Heart left ventricle (tissue), 16 donors: ENCODE measurements at regions of chr2 and their contacts with region 1.

Region 1: DNA sequence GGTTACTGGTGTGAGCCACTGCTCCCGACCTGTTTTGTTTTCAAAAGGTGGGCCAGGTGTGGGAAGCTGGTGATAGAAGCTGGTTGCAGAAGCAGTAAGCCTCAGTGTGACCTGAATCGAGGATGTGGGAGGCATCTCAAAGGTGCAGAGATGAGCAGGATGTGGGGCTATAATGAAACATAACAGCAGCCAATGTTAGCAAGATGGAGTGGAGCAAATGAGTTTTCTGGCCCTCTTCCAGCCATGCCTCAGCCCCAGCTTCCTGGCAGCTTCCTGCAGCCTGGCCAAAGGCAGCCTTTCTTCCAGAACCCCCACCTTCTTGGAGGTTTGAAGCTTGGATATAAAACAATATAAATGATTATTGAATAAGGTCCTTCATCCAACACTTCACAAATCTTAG is 184.8 kb downstream of the NCK2 start:
- DNase-seq: no peak
- ATAC-seq: no peak
- H3K4me3 ChIP-seq: no peak overlapping the region
- H3K27ac ChIP-seq: no peak overlapping the region
- H3K4me1 ChIP-seq: peaks cover 0 to 36% (median 8%) of the 10 kb centered on the region in 12 donors
- H3K27me3 ChIP-seq: no peaks in the 10 kb centered on the region
- CTCF ChIP-seq: no peak
- POLR2A ChIP-seq: no peak

Region 2: DNA sequence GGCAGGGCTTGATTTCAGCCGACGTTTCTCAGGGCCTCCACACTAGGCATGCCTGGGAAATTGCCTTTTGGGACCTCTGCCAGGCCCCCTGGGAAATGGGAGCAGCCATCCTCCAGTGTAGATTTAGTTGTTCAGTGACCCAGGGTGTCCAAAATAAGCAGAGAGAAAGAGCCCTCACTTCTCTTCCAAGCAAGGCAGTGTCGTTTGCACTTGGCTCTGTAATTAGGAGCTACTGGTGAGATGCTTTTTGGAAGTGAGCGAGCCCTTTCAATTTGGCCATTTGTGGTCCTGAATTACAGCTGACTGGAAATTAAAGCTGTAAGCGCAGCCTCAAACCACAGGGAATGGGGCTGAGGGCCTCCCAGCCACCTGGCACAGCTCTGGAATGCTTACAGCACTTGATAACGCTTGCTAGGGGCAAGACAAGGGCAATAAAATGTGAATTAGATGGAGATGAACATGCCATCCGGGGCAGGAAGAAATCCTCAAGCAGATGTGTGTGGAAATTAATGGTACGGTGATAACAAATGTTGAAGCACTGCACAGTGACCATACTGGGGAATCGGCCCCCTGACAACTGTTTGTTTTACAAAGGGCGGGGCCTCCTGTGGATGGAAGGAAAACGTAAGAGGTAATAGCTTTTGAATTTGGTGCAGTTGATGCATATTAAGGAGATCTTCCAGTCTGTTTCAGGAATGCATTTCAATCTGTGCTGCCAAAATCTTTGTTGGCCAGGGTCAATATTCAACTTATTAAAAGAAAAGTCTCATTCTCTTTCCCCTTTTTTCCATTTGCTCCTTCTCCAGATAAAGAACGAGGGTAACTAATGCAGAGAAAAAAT is 91.5 kb after region 1 on chr2:
- intact Hi-C with region 1: loop called in 2 of 10 experiments (anchors 5 to 10 kb)
- DNase-seq: peak in 4 of 5 donors; percentile 29 to 49 (median 38)
- ATAC-seq: peak in 2 of 4 donors; percentile 29 to 32
- H3K4me3 ChIP-seq: no peak overlapping the region
- H3K27ac ChIP-seq: peak overlapping the region in 7 of 12 donors; percentile 0 to 68 (median 8)
- H3K4me1 ChIP-seq: peaks cover under 1 to 36% (median 15%) of the 10 kb centered on the region in 12 donors
- H3K27me3 ChIP-seq: no peaks in the 10 kb centered on the region
- CTCF ChIP-seq: no peak
- POLR2A ChIP-seq: no peak